PC-3 (cell line): ENCODE measurements at regions of chr1 and their contacts with region 1.

Region 1: GRCh38 chr1:167715157-167715999 is 6.4 kb upstream of the MPZL1 start:
- DNase-seq: peak; percentile 97
- ATAC-seq: peak; percentile 45
- H3K4me3 ChIP-seq: peak overlapping the region; percentile 85
- H3K27ac ChIP-seq: 0 out of 2 replicates have a peak overlapping the region, but pooled peaks have one; percentile 11
- H3K4me1 ChIP-seq: peaks cover 6% of the 10 kb centered on the region; the same call in 1 of the 2 replicates
- H3K27me3 ChIP-seq: no peaks in the 10 kb centered on the region
- CTCF ChIP-seq: peak; percentile 94

Region 2: GRCh38 chr1:167936068-167936929 is 220.9 kb after region 1 on chr1 and contains the start of gene DCAF6:
- CTCF ChIA-PET with region 1: interaction called, 3 read pairs
- POLR2A ChIA-PET with region 1: interaction called, 3 read pairs
- intact Hi-C with region 1: loop called (anchors 1 kb)
- DNase-seq: peak; percentile 100
- ATAC-seq: peak; percentile 71
- H3K4me3 ChIP-seq: peak within 1 kb of the TSS; percentile 79
- H3K27ac ChIP-seq: peak within 1 kb of the TSS; percentile 88
- H3K4me1 ChIP-seq: peaks cover 22% of the 10 kb centered on the region
- H3K27me3 ChIP-seq: no peaks in the 10 kb centered on the region
- CTCF ChIP-seq: no peak
- total RNA-seq, gene DCAF6: 29.1 and 52.2 TPM in 2 replicates

Region 3: GRCh38 chr1:168225476-168226190 is 510.3 kb after region 1 on chr1 and contains the start of gene SFT2D2:
- CTCF ChIA-PET with region 1: no interaction called
- POLR2A ChIA-PET with region 1: no interaction called
- intact Hi-C with region 1: loop called (anchors 5 kb)
- DNase-seq: peak; percentile 85
- ATAC-seq: peak; percentile 91
- H3K4me3 ChIP-seq: peak within 1 kb of the TSS; percentile 89
- H3K27ac ChIP-seq: peak within 1 kb of the TSS; percentile 51
- H3K4me1 ChIP-seq: peaks cover 55% of the 10 kb centered on the region
- H3K27me3 ChIP-seq: no peaks in the 10 kb centered on the region
- CTCF ChIP-seq: no peak
- total RNA-seq, gene SFT2D2: 36.8 and 38.7 TPM in 2 replicates